Transverse colon (tissue), 4 donors: ENCODE measurements at regions of chr16 and their contacts with region 1.

Region 1: GRCh38 chr16:61295311-61295710 is 740.9 kb downstream of the CDH8 start:
- DNase-seq: no peak
- H3K4me3 ChIP-seq: no peak overlapping the region
- H3K27ac ChIP-seq: no peak overlapping the region
- H3K4me1 ChIP-seq: no peaks in the 10 kb centered on the region
- H3K27me3 ChIP-seq: no peaks in the 10 kb centered on the region
- CTCF ChIP-seq: no peak
- EP300 ChIP-seq: no peak
- POLR2A ChIP-seq: no peak

Region 2: GRCh38 chr16:61233713-61234112 is 61.6 kb before region 1 on chr16:
- in situ Hi-C with region 1: loop called in 1 of 4 experiments (anchors 10 kb)
- intact Hi-C with region 1: no loop called
- DNase-seq: no peak
- H3K4me3 ChIP-seq: no peak overlapping the region
- H3K27ac ChIP-seq: no peak overlapping the region
- H3K4me1 ChIP-seq: no peaks in the 10 kb centered on the region
- H3K27me3 ChIP-seq: no peaks in the 10 kb centered on the region
- CTCF ChIP-seq: no peak
- EP300 ChIP-seq: no peak
- POLR2A ChIP-seq: no peak